HepG2 (cell line): ENCODE measurements at regions of chr4 and their contacts with region 1.

Region 1: DNA sequence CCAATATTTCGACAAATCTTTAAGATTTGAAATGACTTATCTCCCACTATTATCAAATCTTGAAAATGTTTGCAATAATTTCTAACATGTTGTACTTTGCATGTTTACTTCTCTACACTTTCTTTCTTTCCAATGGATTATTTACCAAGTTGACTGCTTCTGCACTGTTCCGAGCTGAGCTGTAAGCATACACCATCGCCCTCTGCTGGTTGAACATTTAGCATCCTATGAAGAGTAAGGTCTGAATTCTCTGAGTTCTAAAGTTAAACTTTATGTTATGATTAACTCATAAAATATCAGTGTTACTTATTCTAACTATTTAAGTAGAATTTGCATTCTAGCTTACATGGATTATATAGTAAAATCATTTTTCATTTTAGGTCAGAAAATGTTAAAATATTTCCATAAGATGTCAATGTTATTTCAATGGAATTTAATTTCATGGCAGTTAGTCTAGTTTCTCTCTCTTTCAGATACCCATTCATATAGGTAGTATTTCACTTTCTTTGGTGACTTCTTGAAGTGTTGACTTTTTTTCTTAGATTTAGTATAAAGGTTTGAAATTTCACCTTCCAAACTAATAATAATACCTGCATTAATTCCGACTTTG is 137.4 kb downstream of the DKK2 start:
- DNase-seq: peak; percentile 32
- ATAC-seq: peak; percentile 85
- H3K4me3 ChIP-seq: no peak overlapping the region
- H3K27ac ChIP-seq: no peak overlapping the region
- H3K4me1 ChIP-seq: no peaks in the 10 kb centered on the region
- H3K27me3 ChIP-seq: no peaks in the 10 kb centered on the region
- CTCF ChIP-seq: peak; percentile 62
- EP300 ChIP-seq: no peak
- POLR2A ChIP-seq: no peak
- RAD21 ChIP-seq: no peak

Region 2: DNA sequence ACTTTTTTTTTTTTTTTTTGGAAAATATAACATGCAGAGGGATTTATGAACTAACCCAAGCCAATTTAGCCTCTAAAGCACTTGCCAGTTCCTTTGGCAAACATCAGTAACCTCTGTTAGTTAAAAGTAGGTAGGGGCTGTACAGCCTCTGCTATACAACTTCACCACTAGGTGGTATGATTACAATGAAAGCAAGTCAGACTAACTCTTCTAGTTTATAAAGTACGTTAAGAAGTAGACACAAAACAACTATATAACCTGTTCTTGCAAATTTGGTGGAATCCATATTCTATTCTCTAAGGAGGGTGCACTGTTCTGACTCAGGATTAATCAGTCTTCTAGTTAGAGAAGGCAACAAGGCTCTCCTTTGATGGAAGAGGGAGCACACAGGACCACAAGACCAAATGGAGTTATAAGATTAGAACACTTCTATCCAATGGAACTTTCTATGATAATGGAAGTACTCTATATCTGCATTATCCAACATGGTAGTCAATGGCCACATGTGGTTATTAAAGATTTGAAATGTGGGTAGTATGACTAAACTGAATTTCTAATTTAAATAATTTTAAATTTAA is 569.6 kb before region 1 on chr4:
- CTCF ChIA-PET with region 1: no interaction called
- POLR2A ChIA-PET with region 1: no interaction called
- in situ Hi-C with region 1: no loop called
- intact Hi-C with region 1: loop called (anchors 5 kb)
- DNase-seq: peak; percentile 57
- ATAC-seq: peak; percentile 97
- H3K4me3 ChIP-seq: no peak overlapping the region
- H3K27ac ChIP-seq: peak overlapping the region; percentile 26
- H3K4me1 ChIP-seq: peaks cover 23% of the 10 kb centered on the region
- H3K27me3 ChIP-seq: no peaks in the 10 kb centered on the region
- CTCF ChIP-seq: peak; percentile 69
- EP300 ChIP-seq: no peak
- POLR2A ChIP-seq: no peak
- RAD21 ChIP-seq: no peak

Region 3: GRCh38 chr4:106369456-106370060 is 529.2 kb before region 1 on chr4:
- CTCF ChIA-PET with region 1: no interaction called
- POLR2A ChIA-PET with region 1: no interaction called
- in situ Hi-C with region 1: no loop called
- intact Hi-C with region 1: loop called (anchors 2 kb)
- DNase-seq: peak; percentile 42
- ATAC-seq: peak; percentile 67
- H3K4me3 ChIP-seq: no peak overlapping the region
- H3K27ac ChIP-seq: no peak overlapping the region
- H3K4me1 ChIP-seq: peaks cover 17% of the 10 kb centered on the region
- H3K27me3 ChIP-seq: no peaks in the 10 kb centered on the region
- CTCF ChIP-seq: peak; percentile 73
- EP300 ChIP-seq: no peak
- POLR2A ChIP-seq: no peak
- RAD21 ChIP-seq: peak; percentile 67; the same call in 1 of the 2 replicates

Region 4: DNA sequence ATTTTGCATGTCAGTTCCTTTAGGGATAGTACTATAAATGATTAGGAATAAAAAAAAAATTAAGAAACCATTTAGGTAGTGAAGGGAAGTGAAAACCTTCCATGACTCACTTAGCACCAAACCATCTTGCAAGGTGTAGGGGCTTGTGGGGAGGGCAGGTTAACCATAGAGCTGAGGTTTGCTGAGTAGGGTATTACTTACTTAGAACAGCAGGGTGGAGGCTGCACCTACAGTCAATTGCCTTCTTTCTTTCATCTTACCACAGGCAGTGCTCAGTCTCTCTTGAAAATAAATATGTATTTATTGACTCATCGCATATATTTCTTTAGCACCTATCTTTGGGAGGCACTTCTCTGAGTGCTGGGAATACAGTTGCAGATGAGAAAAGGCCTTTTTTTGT is 425.2 kb before region 1 on chr4:
- CTCF ChIA-PET with region 1: no interaction called
- POLR2A ChIA-PET with region 1: no interaction called
- in situ Hi-C with region 1: no loop called
- intact Hi-C with region 1: no loop called
- DNase-seq: no peak
- ATAC-seq: no peak
- H3K4me3 ChIP-seq: no peak overlapping the region
- H3K27ac ChIP-seq: no peak overlapping the region
- H3K4me1 ChIP-seq: peaks cover 22% of the 10 kb centered on the region
- H3K27me3 ChIP-seq: no peaks in the 10 kb centered on the region; a peak in 1 of 5 replicates
- CTCF ChIP-seq: no peak
- EP300 ChIP-seq: no peak
- POLR2A ChIP-seq: no peak
- RAD21 ChIP-seq: no peak

Region 5: GRCh38 chr4:106691749-106692148 is 207.0 kb before region 1 on chr4:
- CTCF ChIA-PET with region 1: no interaction called
- POLR2A ChIA-PET with region 1: no interaction called
- in situ Hi-C with region 1: no loop called
- intact Hi-C with region 1: loop called (anchors 1 kb)
- DNase-seq: no peak
- ATAC-seq: peak; percentile 39; the same call in 1 of the 3 replicates
- H3K4me3 ChIP-seq: no peak overlapping the region
- H3K27ac ChIP-seq: no peak overlapping the region
- H3K4me1 ChIP-seq: no peaks in the 10 kb centered on the region
- H3K27me3 ChIP-seq: no peaks in the 10 kb centered on the region
- CTCF ChIP-seq: no peak
- EP300 ChIP-seq: no peak
- POLR2A ChIP-seq: no peak
- RAD21 ChIP-seq: no peak

Region 6: DNA sequence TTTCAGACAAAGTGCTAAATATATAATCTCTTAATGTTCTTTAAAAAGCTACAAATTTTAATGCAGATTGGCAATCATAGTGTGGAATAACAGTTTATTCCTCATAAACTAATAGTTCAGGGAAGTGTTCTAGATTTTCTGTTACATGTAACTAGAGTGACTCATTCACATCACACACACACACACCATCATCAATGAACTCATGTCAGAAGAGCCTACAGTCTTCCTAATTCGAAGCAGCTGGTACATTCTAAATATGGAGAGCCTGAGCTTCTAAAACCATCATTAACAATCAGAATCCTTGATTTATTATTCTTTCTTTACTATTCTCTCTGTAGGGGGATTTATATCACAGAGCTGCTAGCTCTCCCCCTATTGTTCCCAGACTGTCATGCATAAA is 87.8 kb after region 1 on chr4:
- CTCF ChIA-PET with region 1: no interaction called
- POLR2A ChIA-PET with region 1: no interaction called
- in situ Hi-C with region 1: no loop called
- intact Hi-C with region 1: no loop called
- DNase-seq: no peak
- ATAC-seq: no peak
- H3K4me3 ChIP-seq: no peak overlapping the region
- H3K27ac ChIP-seq: no peak overlapping the region
- H3K4me1 ChIP-seq: no peaks in the 10 kb centered on the region
- H3K27me3 ChIP-seq: no peaks in the 10 kb centered on the region; a peak in 1 of 5 replicates
- CTCF ChIP-seq: no peak
- EP300 ChIP-seq: no peak
- POLR2A ChIP-seq: no peak
- RAD21 ChIP-seq: no peak